Endothelial cell of umbilical vein (primary cell): ENCODE measurements at regions of chr12 and their contacts with region 1.

Region 1: GRCh38 chr12:112992541-112993398 is 14.5 kb downstream of the OAS2 start:
- DNase-seq: peak; percentile 77
- H3K4me3 ChIP-seq: no peak overlapping the region
- H3K27ac ChIP-seq: no peak overlapping the region
- H3K4me1 ChIP-seq: no peaks in the 10 kb centered on the region
- H3K27me3 ChIP-seq: peaks cover 0 to under 1% of the 10 kb centered on the region in 2 experiments
- CTCF ChIP-seq: peak; percentile 92 to 99
- POLR2A ChIP-seq: no peak

Region 2: DNA sequence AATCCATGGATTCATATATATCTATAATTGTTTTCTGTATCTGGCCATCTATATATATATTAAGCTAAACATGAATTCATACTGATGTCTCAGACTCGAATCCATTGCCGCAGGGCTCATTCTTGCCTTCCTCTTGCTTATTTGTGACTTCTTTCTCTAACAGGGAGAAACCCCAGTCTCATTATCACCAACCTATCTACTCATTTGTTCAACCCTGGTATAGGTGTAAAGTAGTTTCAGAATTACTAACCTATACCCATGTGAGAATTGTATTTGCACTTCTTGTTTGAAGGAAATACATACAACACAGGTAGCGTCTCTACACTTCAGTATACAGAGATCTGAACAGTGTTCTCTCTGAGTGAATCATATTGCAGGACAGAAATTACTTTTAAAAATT is 496.3 kb before region 1 on chr12:
- CTCF ChIA-PET with region 1: no interaction called
- POLR2A ChIA-PET with region 1: no interaction called
- dilution Hi-C with region 1: no loop called
- intact Hi-C with region 1: no loop called
- DNase-seq: no peak
- H3K4me3 ChIP-seq: no peak overlapping the region
- H3K27ac ChIP-seq: no peak overlapping the region
- H3K4me1 ChIP-seq: no peaks in the 10 kb centered on the region
- H3K27me3 ChIP-seq: no peaks in the 10 kb centered on the region
- CTCF ChIP-seq: no peak
- POLR2A ChIP-seq: no peak

Region 3: GRCh38 chr12:112950701-112951100 is 42.1 kb before region 1 on chr12:
- CTCF ChIA-PET with region 1: interaction called, 10 read pairs
- POLR2A ChIA-PET with region 1: no interaction called
- dilution Hi-C with region 1: no loop called
- intact Hi-C with region 1: no loop called
- DNase-seq: no peak
- H3K4me3 ChIP-seq: no peak overlapping the region
- H3K27ac ChIP-seq: no peak overlapping the region
- H3K4me1 ChIP-seq: no peaks in the 10 kb centered on the region
- H3K27me3 ChIP-seq: no peaks in the 10 kb centered on the region
- CTCF ChIP-seq: no peak
- POLR2A ChIP-seq: no peak

Region 4: GRCh38 chr12:113005754-113006153 is 13.0 kb after region 1 on chr12:
- CTCF ChIA-PET with region 1: interaction called, 177 read pairs
- POLR2A ChIA-PET with region 1: interaction called, 4 read pairs
- dilution Hi-C with region 1: no loop called
- intact Hi-C with region 1: no loop called
- DNase-seq: no peak
- H3K4me3 ChIP-seq: no peak overlapping the region
- H3K27ac ChIP-seq: no peak overlapping the region
- H3K4me1 ChIP-seq: peaks cover 20% of the 10 kb centered on the region
- H3K27me3 ChIP-seq: no peaks in the 10 kb centered on the region
- CTCF ChIP-seq: peak; percentile 19 to 30
- POLR2A ChIP-seq: no peak

Region 5: GRCh38 chr12:113040722-113041171 is 48.0 kb after region 1 on chr12:
- CTCF ChIA-PET with region 1: interaction called, 130 read pairs
- POLR2A ChIA-PET with region 1: no interaction called
- dilution Hi-C with region 1: no loop called
- intact Hi-C with region 1: no loop called
- DNase-seq: peak; percentile 72
- H3K4me3 ChIP-seq: no peak overlapping the region
- H3K27ac ChIP-seq: peak overlapping the region; percentile 63
- H3K4me1 ChIP-seq: peaks cover 12% of the 10 kb centered on the region
- H3K27me3 ChIP-seq: peaks cover 0 to 4% of the 10 kb centered on the region in 2 experiments
- CTCF ChIP-seq: no peak
- POLR2A ChIP-seq: peak; percentile 24

Region 6: GRCh38 chr12:113098446-113098896 is 105.7 kb after region 1 on chr12:
- CTCF ChIA-PET with region 1: interaction called, 99 read pairs
- POLR2A ChIA-PET with region 1: no interaction called
- dilution Hi-C with region 1: no loop called
- intact Hi-C with region 1: loop called (anchors 1 kb)
- DNase-seq: peak; percentile 54
- H3K4me3 ChIP-seq: no peak overlapping the region
- H3K27ac ChIP-seq: no peak overlapping the region
- H3K4me1 ChIP-seq: no peaks in the 10 kb centered on the region
- H3K27me3 ChIP-seq: no peaks in the 10 kb centered on the region
- CTCF ChIP-seq: peak; percentile 75 to 87
- POLR2A ChIP-seq: no peak

Region 7: GRCh38 chr12:113161414-113162016 is 168.7 kb after region 1 on chr12:
- CTCF ChIA-PET with region 1: interaction called, 11 read pairs
- POLR2A ChIA-PET with region 1: no interaction called
- dilution Hi-C with region 1: no loop called
- intact Hi-C with region 1: no loop called
- DNase-seq: no peak
- H3K4me3 ChIP-seq: no peak overlapping the region
- H3K27ac ChIP-seq: no peak overlapping the region
- H3K4me1 ChIP-seq: no peaks in the 10 kb centered on the region
- H3K27me3 ChIP-seq: no peaks in the 10 kb centered on the region
- CTCF ChIP-seq: no peak
- POLR2A ChIP-seq: no peak